ENCODE measurements at regions of chr1 and their contacts with region 1.

Region 1: GRCh38 chr1:15994590-15995351 is 9.3 kb upstream of the SRARP start:
- DNase-seq: peak; percentile 51
- ATAC-seq: peak; percentile 63
- H3K4me3 Mint-ChIP-seq: no peak overlapping the region
- H3K27ac Mint-ChIP-seq: no peak overlapping the region
- H3K4me1 Mint-ChIP-seq: no peaks in the 10 kb centered on the region
- H3K27me3 Mint-ChIP-seq: peaks cover 2% of the 10 kb centered on the region

Region 2: DNA sequence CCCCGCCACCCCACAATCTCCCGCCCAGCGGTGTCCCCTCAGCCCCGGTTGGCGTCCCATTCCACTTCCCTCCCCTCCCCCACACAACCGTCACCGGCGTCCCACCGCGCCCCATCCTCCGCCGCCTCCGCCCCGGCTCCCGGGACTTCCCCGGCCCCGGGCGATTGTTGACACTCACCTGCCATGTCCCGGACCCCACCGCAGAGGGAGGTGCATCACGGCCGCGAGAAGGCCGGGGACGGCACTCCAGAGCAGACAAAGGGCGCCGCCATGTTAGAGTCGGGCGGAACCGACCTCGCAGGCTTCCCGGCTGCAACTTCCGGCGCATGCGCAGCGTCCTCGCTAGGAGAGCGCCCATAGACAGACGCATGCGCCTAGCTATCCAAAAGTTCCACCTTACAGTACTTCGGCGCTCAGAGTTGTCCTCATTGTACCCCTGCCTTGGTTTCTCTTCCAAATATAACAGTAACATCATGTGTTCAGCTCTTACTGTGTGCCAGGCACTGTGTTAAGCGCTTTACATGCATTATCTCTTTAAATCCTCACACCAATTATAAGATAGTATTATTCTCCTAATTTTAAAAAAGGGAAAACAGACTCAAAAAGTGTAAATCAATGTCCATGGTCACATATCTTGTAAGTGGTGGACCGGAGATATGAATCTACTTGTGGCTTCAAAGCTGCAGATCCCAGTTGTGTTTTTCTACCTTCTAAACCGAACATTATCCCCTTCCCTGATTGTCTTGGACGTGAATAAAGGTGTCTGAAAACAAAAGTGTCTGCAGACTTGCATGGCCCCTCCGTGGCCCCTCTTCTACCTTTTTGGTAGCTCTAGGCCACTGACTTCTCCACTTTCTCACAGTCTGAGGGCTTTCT is 18.7 kb before region 1 on chr1 and contains the start of gene ZBTB17:
- CTCF ChIA-PET with region 1: interaction called, 10 read pairs
- POLR2A ChIA-PET with region 1: no interaction called
- DNase-seq: peak; percentile 96
- ATAC-seq: peak; percentile 94
- H3K4me3 Mint-ChIP-seq: peak within 1 kb of the TSS; percentile 88
- H3K27ac Mint-ChIP-seq: peak within 1 kb of the TSS; percentile 80
- H3K4me1 Mint-ChIP-seq: peaks cover 30% of the 10 kb centered on the region
- H3K27me3 Mint-ChIP-seq: no peaks in the 10 kb centered on the region
- total RNA-seq, gene ZBTB17: 32.3 to 33.3 TPM

Region 3: GRCh38 chr1:16006552-16007485 is 12.0 kb after region 1 on chr1:
- CTCF ChIA-PET with region 1: interaction called, 11 read pairs
- POLR2A ChIA-PET with region 1: no interaction called
- DNase-seq: no peak
- ATAC-seq: peak; percentile 45
- H3K4me3 Mint-ChIP-seq: no peak overlapping the region
- H3K27ac Mint-ChIP-seq: no peak overlapping the region
- H3K4me1 Mint-ChIP-seq: peaks cover 12% of the 10 kb centered on the region
- H3K27me3 Mint-ChIP-seq: peaks cover 5% of the 10 kb centered on the region

Region 4: DNA sequence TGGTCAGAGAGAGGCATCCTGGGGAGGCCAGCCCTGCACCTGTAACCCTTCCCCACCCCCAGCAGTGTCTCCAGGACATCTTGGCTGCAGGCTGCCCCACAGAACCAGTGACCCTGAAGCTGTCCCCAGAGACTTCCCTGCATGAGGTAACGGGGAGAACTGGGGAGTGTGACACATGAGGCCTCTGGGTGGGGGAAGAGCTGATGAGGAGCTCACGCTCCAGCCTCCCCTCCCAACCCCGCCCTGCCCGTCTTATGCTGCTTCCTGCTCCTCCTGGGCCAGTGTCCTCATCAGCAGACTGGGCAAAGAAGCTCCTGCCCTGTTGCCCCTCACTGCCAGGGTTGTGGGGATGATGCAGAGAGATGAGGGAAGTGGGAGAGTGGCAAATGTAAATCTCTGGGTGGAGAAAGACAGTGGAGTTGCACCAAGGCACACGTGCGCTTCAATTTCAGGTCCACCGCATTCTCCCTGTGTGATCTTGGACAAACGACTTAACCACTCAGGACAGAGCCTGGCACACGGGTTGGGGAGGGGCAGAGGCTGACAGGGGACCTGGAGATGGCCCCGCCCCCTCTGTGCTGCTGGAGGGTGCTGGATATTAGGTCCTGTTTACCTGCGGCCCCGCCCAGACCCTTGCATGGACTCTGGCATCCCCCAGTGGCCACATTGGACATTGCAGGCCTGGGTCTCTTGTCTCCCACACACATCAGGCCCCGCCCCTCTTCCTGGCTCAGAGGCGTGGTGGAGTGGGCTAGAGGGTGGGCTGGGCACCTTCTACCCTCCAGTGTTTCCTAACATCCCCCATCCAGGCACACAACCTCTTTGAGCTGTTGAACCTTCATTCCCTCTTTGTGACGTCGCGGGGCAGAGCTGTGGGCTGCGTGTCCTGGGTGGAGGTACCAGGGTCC is 61.1 kb after region 1 on chr1:
- CTCF ChIA-PET with region 1: no interaction called
- POLR2A ChIA-PET with region 1: no interaction called
- DNase-seq: peak; percentile 93
- ATAC-seq: peak; percentile 97
- H3K4me3 Mint-ChIP-seq: no peak overlapping the region
- H3K27ac Mint-ChIP-seq: peak overlapping the region; percentile 17
- H3K4me1 Mint-ChIP-seq: peaks cover 16% of the 10 kb centered on the region
- H3K27me3 Mint-ChIP-seq: no peaks in the 10 kb centered on the region

Region 5: DNA sequence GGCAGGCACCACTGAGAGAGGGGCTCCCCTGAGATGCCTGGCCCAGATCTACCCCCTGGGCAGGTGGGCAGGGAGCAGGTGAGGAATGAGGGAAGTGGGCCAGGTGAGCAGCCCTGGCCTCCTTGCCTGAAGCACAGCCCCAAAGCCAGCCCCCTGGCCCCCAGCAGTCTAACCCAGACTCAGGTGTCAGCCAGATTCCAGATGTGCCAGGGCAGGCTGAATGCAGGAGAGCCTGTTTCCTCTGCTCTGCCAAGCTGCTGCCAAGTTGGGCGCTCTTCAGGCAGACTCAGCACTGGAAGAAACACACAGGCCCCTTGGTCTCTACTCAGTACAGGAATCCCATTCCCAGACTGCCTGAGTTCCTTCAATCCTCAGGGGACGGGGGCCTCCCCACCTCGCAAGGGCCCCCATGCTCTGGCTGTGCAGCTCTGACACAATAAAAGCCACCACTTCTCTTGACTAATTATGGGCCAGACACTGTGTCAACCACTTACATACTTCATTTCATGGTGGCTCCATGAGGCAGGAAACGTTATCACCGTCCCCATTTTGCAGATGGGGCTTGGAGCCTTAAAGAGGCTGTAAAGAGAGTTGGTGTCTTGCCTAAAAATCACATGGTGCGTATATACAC is 197.3 kb after region 1 on chr1:
- CTCF ChIA-PET with region 1: no interaction called
- POLR2A ChIA-PET with region 1: no interaction called
- DNase-seq: no peak
- ATAC-seq: no peak
- H3K4me3 Mint-ChIP-seq: no peak overlapping the region
- H3K27ac Mint-ChIP-seq: no peak overlapping the region
- H3K4me1 Mint-ChIP-seq: no peaks in the 10 kb centered on the region
- H3K27me3 Mint-ChIP-seq: peaks cover 10% of the 10 kb centered on the region

Region 6: DNA sequence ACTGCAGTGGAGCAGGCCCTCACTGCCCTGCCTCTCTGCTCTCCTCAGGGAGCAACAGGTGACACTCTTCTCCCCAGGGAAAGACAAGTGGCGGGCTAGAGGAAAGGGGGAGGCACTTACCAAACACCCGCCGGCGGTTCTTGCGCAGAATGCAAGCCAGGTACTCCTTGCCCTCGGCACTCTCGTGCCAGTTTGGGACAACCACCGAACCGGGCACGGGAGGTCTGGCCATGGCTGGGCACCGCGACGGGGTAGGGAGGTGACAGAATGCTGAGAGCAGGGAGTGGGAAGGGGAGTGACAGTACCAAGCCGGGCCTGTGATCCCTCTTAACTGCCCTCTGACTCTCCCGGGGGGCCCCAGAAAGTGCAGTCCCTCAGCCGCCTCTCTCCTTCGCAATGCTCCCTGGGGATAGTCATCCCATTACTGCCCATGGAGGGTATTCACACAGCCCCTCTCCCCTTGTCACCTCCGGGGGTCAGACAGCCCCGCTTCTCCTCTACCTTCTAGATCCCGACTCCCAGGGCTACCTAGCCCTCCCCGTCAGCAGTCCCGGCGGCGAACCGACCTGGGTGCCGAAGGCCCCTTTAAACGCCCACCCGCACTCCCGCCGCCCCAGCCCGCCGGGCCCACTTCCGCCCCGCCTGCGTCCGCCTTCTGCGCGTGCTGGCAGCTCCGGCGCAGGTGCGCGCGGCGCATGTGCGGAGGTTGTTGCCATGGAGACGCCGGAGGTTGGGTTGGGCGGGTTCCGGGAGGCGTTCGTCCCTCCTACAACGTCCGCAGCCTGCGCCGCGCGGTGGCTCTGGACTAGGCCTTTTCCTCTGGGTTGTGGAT is 242.0 kb after region 1 on chr1 and contains the start of gene CPLANE2:
- CTCF ChIA-PET with region 1: no interaction called
- POLR2A ChIA-PET with region 1: no interaction called
- DNase-seq: peak; percentile 98
- ATAC-seq: peak; percentile 89
- H3K4me3 Mint-ChIP-seq: peak within 1 kb of the TSS; percentile 84
- H3K27ac Mint-ChIP-seq: peak within 1 kb of the TSS; percentile 87
- H3K4me1 Mint-ChIP-seq: peaks cover 34% of the 10 kb centered on the region
- H3K27me3 Mint-ChIP-seq: no peaks in the 10 kb centered on the region
- total RNA-seq, gene CPLANE2: 5.1 to 6.1 TPM

Measured in activated CD8-positive, alpha-beta T cell treated with anti-CD3 and anti-CD28 coated beads, Interleukin-2, amount 10 ng/mL, durations not matched to agents 7 days and 5 days (primary cell).